Colonic mucosa (tissue), 4 donors: ENCODE measurements at regions of chr1 and their contacts with region 1.

Region 1: GRCh38 chr1:37556712-37557196 is at the start of gene DNALI1:
- DNase-seq: peak; percentile 85
- H3K4me3 ChIP-seq: no peak within 1 kb of the TSS
- H3K27ac ChIP-seq: no peak within 1 kb of the TSS
- H3K4me1 ChIP-seq: peaks cover 5% of the 10 kb centered on the region
- H3K27me3 ChIP-seq: no peaks in the 10 kb centered on the region
- CTCF ChIP-seq: no peak
- total RNA-seq, gene DNALI1: 1.9 to 4.1 TPM

Region 2: GRCh38 chr1:37595440-37596319 is 38.9 kb after region 1 on chr1 and contains the start of gene GNL2:
- intact Hi-C with region 1: loop called (anchors 5 kb)
- DNase-seq: peak; percentile 98
- H3K4me3 ChIP-seq: peak within 1 kb of the TSS; percentile 81
- H3K27ac ChIP-seq: peak within 1 kb of the TSS; percentile 74
- H3K4me1 ChIP-seq: peaks cover 13% of the 10 kb centered on the region
- H3K27me3 ChIP-seq: no peaks in the 10 kb centered on the region
- CTCF ChIP-seq: no peak
- total RNA-seq, gene GNL2: 28.4 to 35.9 TPM